ENCODE measurements at regions of chr6 and their contacts with region 1.

Region 1: DNA sequence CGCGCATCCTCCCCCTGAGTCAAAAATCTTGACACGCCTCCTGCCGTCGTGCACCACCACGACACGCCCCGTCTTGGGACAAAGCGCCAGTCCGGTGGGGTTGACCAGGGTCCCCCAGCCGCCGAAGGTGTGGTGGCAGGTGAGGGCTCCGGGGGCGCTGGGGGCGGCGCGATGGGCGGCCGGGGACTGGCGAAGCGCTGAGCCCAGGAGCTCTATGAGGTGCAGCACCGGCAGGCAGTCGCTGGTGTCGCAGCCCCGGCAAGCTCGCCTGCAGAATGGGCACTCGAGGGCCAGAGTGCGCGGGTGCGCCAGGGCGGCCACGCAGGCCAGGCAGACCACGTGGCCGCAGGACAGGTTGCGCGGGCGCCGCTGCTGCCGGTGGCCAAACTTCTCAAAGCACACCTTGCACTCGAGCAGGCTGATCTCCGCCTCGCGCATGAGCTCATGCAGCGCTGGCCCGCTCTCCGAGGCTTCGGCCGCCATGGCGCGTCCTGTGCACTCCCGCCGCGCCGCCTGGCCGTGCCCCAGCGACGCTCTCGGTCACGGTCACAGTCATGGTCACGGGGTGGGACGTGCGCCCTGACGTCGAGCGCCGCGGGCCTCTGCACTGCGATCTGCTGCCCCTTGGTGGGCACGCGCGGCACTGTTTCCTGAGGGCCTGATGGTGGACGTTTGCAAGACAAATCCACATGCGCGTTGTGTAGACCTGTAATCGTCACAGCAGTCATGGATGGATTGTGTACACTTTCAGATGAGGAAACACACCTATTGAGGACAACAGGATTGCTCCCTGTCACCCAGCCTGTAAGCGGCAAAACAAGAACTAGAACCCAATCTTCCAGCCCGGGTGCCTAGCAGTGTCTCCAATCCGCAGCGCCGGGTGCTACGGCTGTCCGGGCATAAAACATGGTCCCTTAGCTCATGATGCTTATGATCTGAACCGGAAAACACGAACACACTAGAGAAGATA is at the start of gene NHLRC1:
- DNase-seq: peak; percentile 83
- ATAC-seq: peak; percentile 92
- H3K4me3 Mint-ChIP-seq: peak within 1 kb of the TSS; percentile 58
- H3K27ac Mint-ChIP-seq: no peak within 1 kb of the TSS
- H3K4me1 Mint-ChIP-seq: peaks cover 9% of the 10 kb centered on the region
- H3K27me3 Mint-ChIP-seq: peaks cover 23% of the 10 kb centered on the region
- CTCF ChIP-seq: peak; percentile 72
- total RNA-seq, gene NHLRC1: 1.0 to 1.4 TPM (median 1.2 TPM) in 3 replicates

Region 2: GRCh38 chr6:17912521-17912920 is 209.9 kb before region 1 on chr6:
- CTCF ChIA-PET with region 1: interaction called, 10 read pairs
- POLR2A ChIA-PET with region 1: no interaction called
- DNase-seq: no peak
- ATAC-seq: no peak
- H3K4me3 Mint-ChIP-seq: no peak overlapping the region
- H3K27ac Mint-ChIP-seq: peak overlapping the region; percentile 14; the same call in 1 of the 2 replicates
- H3K4me1 Mint-ChIP-seq: peaks cover 30% of the 10 kb centered on the region
- H3K27me3 Mint-ChIP-seq: no peaks in the 10 kb centered on the region
- CTCF ChIP-seq: no peak

Region 3: GRCh38 chr6:17987576-17988421 is 134.6 kb before region 1 on chr6 and contains the start of gene KIF13A:
- CTCF ChIA-PET with region 1: interaction called, 12 read pairs
- POLR2A ChIA-PET with region 1: interaction called, 4 read pairs
- DNase-seq: peak; percentile 49
- ATAC-seq: peak; percentile 58
- H3K4me3 Mint-ChIP-seq: peak within 1 kb of the TSS; percentile 94
- H3K27ac Mint-ChIP-seq: peak within 1 kb of the TSS; percentile 96
- H3K4me1 Mint-ChIP-seq: peaks cover 37% of the 10 kb centered on the region
- H3K27me3 Mint-ChIP-seq: peaks cover 15% of the 10 kb centered on the region
- CTCF ChIP-seq: no peak
- total RNA-seq, gene KIF13A: 27.8 to 32.7 TPM (median 27.8 TPM) in 3 replicates

Region 4: DNA sequence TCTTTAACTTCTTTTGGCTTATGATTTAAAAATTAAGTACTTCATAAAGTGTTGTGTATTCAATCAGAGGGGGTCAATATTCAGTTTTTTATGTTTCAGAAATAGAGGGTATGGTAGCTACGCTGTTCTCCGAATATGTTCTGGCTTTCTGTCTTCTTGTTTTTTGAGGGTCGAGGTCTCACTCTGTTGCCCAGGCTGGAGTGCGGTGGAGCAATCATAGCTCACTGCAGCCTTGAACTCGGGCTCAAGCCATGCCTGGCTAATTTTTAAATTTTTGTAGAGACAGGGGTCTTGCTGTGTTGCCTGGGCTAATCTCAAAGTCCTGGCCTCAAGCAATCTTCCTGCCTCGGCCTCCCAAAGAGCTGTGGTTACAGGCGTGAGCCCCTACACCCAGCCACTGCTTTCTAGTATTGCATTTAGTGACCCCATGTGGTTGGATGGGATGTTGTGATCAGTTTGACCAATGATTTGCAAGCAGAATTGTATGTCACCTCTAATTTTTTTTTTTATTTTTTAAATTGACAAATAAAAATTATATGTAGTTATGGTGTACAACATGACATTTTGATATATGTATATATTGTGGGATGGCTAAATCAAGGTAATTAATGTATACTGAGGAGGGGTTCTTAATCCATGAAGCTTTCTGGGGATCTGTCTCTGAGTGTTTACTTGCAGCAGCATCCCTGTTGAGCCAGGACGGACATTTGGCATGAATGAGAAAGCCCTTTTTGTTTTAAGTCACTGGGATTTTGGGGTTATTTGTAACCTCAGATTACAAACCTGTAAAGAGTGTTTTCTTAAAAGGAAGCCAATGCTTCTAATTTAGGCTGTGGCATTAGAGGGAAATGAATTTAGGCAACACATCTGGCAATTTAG is 180.4 kb after region 1 on chr6:
- CTCF ChIA-PET with region 1: interaction called, 15 read pairs
- POLR2A ChIA-PET with region 1: no interaction called
- DNase-seq: no peak
- ATAC-seq: peak; percentile 85
- H3K4me3 Mint-ChIP-seq: no peak overlapping the region
- H3K27ac Mint-ChIP-seq: peak overlapping the region; percentile 75
- H3K4me1 Mint-ChIP-seq: peaks cover 22% of the 10 kb centered on the region
- H3K27me3 Mint-ChIP-seq: no peaks in the 10 kb centered on the region
- CTCF ChIP-seq: no peak

Region 5: GRCh38 chr6:18503593-18504231 is 381.3 kb after region 1 on chr6:
- CTCF ChIA-PET with region 1: interaction called, 11 read pairs
- POLR2A ChIA-PET with region 1: no interaction called
- DNase-seq: peak; percentile 53
- ATAC-seq: peak; percentile 89
- H3K4me3 Mint-ChIP-seq: no peak overlapping the region
- H3K27ac Mint-ChIP-seq: no peak overlapping the region
- H3K4me1 Mint-ChIP-seq: peaks cover 15% of the 10 kb centered on the region
- H3K27me3 Mint-ChIP-seq: no peaks in the 10 kb centered on the region
- CTCF ChIP-seq: peak; percentile 63

Measured in WTC11 (cell line).